ENCODE measurements at regions of chrX and their contacts with region 1.

Region 1: DNA sequence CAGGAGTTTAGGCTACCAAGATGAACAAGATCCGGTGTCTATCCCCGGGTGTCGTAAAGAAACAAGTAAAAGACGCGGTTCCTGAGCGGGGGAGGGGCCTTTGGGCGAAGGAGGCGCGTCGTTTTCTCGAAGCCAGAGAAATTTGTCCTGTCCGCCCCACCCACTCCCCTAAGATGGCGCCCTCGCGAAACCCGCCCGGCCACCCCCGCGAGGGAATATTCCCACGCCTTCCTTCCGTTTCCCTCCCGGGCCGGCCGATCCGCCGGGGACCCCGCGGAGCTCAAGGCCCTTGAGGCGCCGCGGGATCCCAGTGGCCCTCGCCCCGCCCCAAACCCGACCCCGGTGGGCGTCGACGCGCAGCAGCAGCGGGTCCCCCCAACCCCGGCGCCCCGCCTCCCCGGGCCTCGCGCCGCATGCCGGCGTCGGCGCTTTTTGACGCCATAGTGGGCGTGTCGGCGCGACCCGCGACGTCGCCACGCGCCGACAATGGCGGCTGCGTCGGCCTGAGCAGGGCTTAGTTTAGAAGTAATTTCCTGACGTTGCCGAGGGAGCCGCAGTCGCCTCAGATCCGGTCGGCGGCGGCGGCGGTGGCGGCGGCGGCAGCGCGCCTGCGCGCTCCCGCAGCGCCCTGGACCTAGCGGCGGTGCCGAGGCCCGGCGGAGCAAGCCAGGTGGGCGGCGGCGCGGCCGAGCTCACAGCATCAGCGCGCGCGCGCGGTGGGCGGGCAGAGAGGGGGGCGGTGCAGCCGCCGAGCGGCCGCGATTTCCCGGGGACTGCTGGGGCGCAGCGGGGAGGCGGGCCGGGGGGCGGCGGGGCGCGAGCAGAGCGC is at the start of gene HTATSF1:
- DNase-seq: peak; percentile 92
- ATAC-seq: peak; percentile 76
- H3K4me3 Mint-ChIP-seq: peak within 1 kb of the TSS; percentile 83
- H3K27ac Mint-ChIP-seq: peak within 1 kb of the TSS; percentile 92
- H3K4me1 Mint-ChIP-seq: peaks cover 18% of the 10 kb centered on the region
- H3K27me3 Mint-ChIP-seq: no peaks in the 10 kb centered on the region
- total RNA-seq, gene HTATSF1: 34.8 to 42.3 TPM

Region 2: GRCh38 chrX:135985141-135985972 is 511.6 kb before region 1 on chrX and contains the start of gene SLC9A6:
- CTCF ChIA-PET with region 1: no interaction called
- POLR2A ChIA-PET with region 1: no interaction called
- intact Hi-C with region 1: loop called in 1 of 2 experiments (anchors 5 kb)
- DNase-seq: peak; percentile 81
- ATAC-seq: peak; percentile 82
- H3K4me3 Mint-ChIP-seq: peak within 1 kb of the TSS; percentile 88
- H3K27ac Mint-ChIP-seq: peak within 1 kb of the TSS; percentile 90
- H3K4me1 Mint-ChIP-seq: peaks cover 51% of the 10 kb centered on the region
- H3K27me3 Mint-ChIP-seq: no peaks in the 10 kb centered on the region
- total RNA-seq, gene SLC9A6: 11.8 to 12.6 TPM

Region 3: DNA sequence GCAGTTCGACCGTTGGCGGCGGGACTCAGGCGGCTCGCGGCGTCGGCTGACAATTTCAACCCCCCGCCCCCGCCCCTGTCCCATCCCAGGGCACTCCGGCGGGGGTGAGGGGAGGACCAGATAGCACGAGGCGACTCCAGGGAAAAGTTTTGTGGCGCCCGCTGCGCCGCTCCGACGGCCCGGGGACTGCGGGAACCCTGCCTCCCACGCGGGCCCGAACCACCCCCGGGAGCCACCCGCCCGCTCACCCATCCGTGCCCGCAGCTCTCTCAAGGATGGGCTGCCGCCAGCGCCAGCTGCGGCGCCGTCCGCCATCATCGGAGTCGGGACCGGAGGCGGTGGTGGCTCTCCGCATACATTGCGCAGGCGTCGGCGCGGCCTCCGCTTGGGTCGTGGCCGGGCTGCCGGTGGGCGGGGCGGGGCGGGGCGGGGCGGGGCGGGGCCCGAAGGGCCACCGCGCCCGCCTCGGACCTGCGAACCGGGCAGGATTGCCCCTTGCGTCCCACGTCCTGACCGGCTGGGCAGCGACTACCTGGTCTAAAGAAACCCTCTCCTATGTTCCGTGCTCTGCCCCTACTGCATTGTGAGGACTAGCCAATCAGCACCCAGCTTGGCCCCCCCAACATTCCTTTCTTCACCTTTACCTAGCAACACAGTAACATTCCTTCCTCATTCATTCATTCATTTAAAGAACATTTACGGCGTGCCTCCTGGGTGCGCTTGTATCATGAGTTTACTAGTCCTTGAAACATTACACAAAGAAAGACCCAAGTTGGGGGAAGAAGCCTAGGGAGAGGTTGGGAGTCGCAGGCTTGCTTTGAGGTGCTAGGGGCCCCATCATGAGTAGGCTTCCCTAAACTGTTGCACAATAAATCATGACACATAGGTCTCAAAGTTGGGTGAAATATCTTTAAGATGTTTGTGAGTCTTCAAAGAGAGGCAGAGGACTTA is 245.7 kb before region 1 on chrX and contains the start of gene MAP7D3:
- CTCF ChIA-PET with region 1: no interaction called
- POLR2A ChIA-PET with region 1: no interaction called
- intact Hi-C with region 1: loop called (anchors 1 to 5 kb)
- DNase-seq: peak; percentile 80
- ATAC-seq: peak; percentile 91
- H3K4me3 Mint-ChIP-seq: peak within 1 kb of the TSS; percentile 81
- H3K27ac Mint-ChIP-seq: peak within 1 kb of the TSS; percentile 80
- H3K4me1 Mint-ChIP-seq: peaks cover 8% of the 10 kb centered on the region
- H3K27me3 Mint-ChIP-seq: no peaks in the 10 kb centered on the region
- total RNA-seq, gene MAP7D3: 16.8 to 22.7 TPM

Region 4: DNA sequence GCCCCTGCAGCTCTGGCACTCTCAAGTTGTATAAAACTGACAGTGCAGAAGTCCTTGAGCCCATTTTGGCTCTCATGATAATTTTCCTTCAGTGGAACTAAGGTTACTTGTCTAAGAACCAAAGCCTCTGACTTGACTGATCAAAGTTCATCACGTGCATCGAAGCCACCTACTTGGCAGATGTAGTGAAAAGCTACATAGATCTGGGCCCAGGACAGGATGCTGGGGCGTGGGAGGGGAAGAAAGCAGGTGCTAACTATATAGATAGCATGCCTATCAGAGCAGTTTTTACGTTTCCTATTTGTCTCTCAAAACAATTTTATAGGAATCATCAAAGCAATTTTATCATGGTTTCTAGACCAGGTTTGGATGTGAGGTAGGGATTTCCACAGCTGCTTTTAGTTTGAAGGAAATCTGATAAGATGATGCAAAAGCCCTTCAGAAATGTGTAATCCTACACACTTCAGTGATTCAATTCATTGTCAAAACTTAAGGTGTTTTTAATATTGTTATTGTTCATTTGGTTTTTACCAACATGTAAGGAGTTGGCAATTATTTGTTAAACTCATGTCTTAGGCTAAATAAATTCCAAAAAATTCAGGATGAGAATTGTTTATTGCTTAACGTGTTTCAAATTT is 149.7 kb after region 1 on chrX:
- CTCF ChIA-PET with region 1: no interaction called
- POLR2A ChIA-PET with region 1: no interaction called
- intact Hi-C with region 1: loop called in 1 of 2 experiments (anchors 5 kb)
- DNase-seq: peak; percentile 84
- ATAC-seq: peak; percentile 60
- H3K4me3 Mint-ChIP-seq: peak overlapping the region; percentile 96
- H3K27ac Mint-ChIP-seq: peak overlapping the region; percentile 100
- H3K4me1 Mint-ChIP-seq: peaks cover 57% of the 10 kb centered on the region
- H3K27me3 Mint-ChIP-seq: no peaks in the 10 kb centered on the region

Region 5: DNA sequence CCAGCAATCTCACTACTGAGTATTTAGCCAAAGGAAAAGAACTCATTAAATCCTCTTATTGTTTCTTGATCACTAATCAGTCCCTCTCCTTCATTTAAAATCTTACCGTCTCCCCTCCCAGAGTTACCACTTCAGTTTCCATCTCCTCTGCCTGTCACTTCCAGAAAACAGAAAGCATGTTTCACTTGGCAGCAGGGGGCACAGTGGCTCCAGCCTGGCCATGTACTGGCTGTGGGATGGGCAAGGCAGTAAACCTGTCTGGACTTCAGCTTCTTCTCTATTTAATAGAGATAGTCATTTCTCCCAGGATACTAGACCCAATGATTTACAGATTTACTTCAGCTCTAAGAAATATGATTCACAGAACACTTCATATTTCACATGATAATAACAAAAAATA is 214.2 kb after region 1 on chrX:
- CTCF ChIA-PET with region 1: no interaction called
- POLR2A ChIA-PET with region 1: no interaction called
- intact Hi-C with region 1: loop called in 1 of 2 experiments (anchors 5 kb)
- DNase-seq: peak; percentile 33
- ATAC-seq: peak; percentile 20
- H3K4me3 Mint-ChIP-seq: no peak overlapping the region
- H3K27ac Mint-ChIP-seq: peak overlapping the region; percentile 92
- H3K4me1 Mint-ChIP-seq: peaks cover 74% of the 10 kb centered on the region
- H3K27me3 Mint-ChIP-seq: no peaks in the 10 kb centered on the region

Region 6: GRCh38 chrX:137550665-137551261 is 1053.8 kb after region 1 on chrX:
- CTCF ChIA-PET with region 1: no interaction called
- POLR2A ChIA-PET with region 1: no interaction called
- intact Hi-C with region 1: no loop called
- DNase-seq: no peak
- ATAC-seq: no peak
- H3K4me3 Mint-ChIP-seq: peak overlapping the region; percentile 15
- H3K27ac Mint-ChIP-seq: no peak overlapping the region
- H3K4me1 Mint-ChIP-seq: peaks cover 8% of the 10 kb centered on the region
- H3K27me3 Mint-ChIP-seq: peaks cover 40% of the 10 kb centered on the region

Measured in activated CD4-positive, alpha-beta T cell treated with anti-CD3 and anti-CD28 coated beads for 36 hours (primary cell).